ENCODE measurements at regions of chr2 and their contacts with region 1.

Region 1: DNA sequence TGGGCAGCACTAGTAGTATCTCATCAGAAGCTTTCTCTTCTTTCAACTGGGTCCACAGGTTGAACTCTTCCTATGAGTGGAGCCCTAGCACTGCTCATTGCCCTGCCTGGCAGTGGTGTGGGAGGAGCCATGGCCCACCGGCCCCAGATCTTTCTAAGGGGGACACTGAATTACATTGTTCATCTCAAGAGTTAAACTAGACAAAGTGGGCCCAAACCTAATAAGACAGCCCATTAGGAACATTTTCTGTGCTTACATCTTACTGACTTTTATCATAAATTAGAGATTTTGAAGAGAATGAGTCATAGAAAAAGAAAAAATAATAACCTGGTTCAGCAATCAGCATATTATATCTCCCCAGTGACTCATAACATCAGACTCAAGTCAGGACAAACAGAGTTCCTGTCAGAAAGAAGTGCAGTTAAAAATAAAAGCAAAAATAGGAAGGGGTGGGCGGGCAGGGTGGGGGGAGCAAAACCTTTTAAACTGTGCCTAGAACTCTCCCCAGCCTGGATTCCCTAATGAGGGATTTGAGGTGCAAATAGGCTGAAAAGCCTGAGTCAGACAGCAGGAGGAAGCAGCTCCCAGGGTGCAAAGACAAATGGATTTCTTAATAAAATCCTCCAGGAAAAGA is 161.6 kb upstream of the TRIB2 start:
- DNase-seq: no peak
- H3K4me3 Mint-ChIP-seq: peak overlapping the region; percentile 14
- H3K27ac Mint-ChIP-seq: peak overlapping the region; percentile 85
- H3K4me1 Mint-ChIP-seq: peaks cover 42% of the 10 kb centered on the region
- H3K27me3 Mint-ChIP-seq: no peaks in the 10 kb centered on the region

Region 2: DNA sequence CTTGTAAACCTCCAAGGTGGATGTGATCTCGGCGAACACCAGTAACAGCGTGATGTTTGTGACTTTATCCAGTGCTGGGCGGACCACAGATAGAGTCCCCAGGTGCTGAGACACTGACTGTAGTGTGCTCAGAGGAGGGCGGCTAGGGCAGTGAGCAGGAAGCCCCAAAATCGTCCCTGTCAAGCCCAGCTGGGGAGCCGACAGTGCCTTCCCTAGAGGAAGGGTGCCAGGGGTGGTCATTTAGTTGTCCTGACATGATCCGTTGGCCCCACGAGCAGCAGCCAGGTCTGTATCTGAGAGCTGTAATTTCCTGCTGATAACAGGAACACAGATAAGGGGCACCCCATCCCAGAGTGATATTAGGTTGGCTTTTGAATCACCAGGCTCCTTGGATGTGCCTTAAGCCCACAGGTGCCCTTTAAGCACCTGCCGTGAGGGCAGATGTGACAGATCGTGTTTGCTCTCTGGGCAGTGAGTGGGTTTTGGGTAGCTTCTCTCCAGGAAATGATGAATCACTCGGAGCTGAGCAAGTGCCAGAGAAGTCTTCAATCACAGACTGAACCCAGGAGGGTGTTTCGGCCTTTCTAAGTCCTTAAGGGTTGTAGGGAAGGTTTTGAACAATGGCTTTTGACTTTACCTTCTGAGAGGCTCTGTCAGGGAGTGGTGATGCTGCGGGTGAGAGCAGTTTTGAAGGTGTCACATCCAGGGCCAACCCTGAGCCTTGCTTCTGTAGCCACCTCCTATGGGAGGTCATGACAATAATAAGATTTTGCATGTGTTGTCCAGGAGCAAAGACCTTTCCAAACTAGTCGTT is 801.0 kb before region 1 on chr2:
- intact Hi-C with region 1: loop called (anchors 5 kb)
- DNase-seq: peak; percentile 52
- H3K4me3 Mint-ChIP-seq: peak overlapping the region; percentile 74
- H3K27ac Mint-ChIP-seq: peak overlapping the region; percentile 93
- H3K4me1 Mint-ChIP-seq: peaks cover 75% of the 10 kb centered on the region
- H3K27me3 Mint-ChIP-seq: no peaks in the 10 kb centered on the region

Region 3: DNA sequence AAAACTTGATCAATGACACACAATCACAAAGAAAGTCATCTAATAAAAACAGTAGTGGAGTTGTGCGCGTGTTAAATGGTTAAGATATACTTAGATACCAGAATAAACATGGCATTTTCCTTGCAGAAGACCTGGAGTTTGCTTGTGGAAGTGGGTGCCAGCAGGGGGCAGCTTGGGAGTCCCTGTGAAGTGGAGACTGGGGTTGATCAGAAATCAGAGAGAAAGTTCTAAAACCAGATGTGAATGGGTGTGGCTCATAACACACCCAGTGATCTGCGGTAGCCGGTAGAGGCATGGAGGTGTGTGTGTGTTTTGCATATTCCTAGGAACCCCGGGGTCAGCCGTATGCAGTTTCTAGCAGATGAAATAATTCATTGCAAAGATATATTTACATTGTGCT is 138.5 kb before region 1 on chr2:
- intact Hi-C with region 1: loop called (anchors 5 kb)
- DNase-seq: peak; percentile 54
- H3K4me3 Mint-ChIP-seq: no peak overlapping the region
- H3K27ac Mint-ChIP-seq: no peak overlapping the region
- H3K4me1 Mint-ChIP-seq: peaks cover 59% of the 10 kb centered on the region
- H3K27me3 Mint-ChIP-seq: no peaks in the 10 kb centered on the region

Region 4: GRCh38 chr2:12456293-12457151 is 98.6 kb before region 1 on chr2:
- intact Hi-C with region 1: loop called (anchors 5 kb)
- DNase-seq: peak; percentile 54
- H3K4me3 Mint-ChIP-seq: peak overlapping the region; percentile 61
- H3K27ac Mint-ChIP-seq: peak overlapping the region; percentile 74
- H3K4me1 Mint-ChIP-seq: peaks cover 42% of the 10 kb centered on the region
- H3K27me3 Mint-ChIP-seq: no peaks in the 10 kb centered on the region

Region 5: DNA sequence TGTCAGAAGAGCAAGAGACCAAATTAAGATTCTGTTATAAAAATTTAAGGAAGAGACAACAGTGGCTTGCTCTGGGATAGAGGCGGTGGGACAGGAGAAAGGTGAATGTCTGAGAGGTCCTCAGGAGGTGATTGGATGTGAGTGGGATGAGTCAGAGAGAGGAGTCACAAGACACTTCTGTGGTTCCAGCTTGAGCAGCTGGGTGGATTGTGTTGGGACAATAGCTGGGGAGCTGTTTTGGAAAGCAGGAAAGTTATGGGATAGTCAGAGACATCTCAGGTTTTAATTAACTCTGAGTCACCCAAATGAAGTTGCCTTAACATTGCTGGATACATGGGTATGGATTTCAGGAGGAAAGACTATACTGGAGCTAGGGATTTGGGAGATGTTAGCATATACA is 56.4 kb before region 1 on chr2:
- intact Hi-C with region 1: no loop called
- DNase-seq: no peak
- H3K4me3 Mint-ChIP-seq: no peak overlapping the region
- H3K27ac Mint-ChIP-seq: peak overlapping the region; percentile 6
- H3K4me1 Mint-ChIP-seq: peaks cover 79% of the 10 kb centered on the region
- H3K27me3 Mint-ChIP-seq: no peaks in the 10 kb centered on the region

Region 6: DNA sequence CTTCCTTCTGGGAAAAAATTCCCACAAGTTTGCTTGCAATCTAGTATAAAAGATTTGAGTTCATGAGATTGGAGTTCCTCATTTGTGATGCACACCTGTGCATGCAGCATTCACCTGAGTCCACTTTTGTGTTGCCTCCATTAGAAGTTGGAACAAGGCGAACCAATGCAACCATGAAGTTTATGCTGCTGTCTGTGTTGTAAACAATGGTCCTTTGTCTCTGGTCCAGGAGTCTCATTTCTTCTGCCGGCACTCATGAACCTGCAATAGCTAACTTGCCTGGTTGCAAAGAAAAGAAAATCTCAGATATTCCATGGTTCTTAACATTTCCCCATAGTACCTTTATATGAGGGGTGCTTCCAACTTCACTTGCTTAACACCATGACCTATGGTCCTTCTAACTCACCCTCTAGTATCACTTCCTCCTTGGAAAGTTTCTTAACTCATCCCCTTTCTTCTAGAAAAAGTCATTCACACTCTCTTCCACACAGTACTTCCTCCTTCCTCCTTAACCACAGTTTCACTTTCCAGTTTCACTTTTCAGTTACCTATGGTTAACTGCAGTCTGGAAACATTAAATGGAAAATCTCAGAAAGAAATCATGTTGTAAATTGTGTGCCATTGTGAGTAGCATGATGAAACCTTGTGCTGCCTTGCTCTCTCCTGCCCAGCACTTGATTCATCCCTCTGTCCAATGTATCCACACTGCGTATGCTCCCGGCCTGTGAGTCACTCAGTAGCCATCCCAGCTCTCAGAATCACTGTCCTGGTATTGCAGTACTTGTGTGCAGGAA is 32.8 kb after region 1 on chr2:
- intact Hi-C with region 1: loop called (anchors 1 kb)
- DNase-seq: no peak
- H3K4me3 Mint-ChIP-seq: no peak overlapping the region
- H3K27ac Mint-ChIP-seq: no peak overlapping the region
- H3K4me1 Mint-ChIP-seq: peaks cover 15% of the 10 kb centered on the region
- H3K27me3 Mint-ChIP-seq: no peaks in the 10 kb centered on the region

Region 7: DNA sequence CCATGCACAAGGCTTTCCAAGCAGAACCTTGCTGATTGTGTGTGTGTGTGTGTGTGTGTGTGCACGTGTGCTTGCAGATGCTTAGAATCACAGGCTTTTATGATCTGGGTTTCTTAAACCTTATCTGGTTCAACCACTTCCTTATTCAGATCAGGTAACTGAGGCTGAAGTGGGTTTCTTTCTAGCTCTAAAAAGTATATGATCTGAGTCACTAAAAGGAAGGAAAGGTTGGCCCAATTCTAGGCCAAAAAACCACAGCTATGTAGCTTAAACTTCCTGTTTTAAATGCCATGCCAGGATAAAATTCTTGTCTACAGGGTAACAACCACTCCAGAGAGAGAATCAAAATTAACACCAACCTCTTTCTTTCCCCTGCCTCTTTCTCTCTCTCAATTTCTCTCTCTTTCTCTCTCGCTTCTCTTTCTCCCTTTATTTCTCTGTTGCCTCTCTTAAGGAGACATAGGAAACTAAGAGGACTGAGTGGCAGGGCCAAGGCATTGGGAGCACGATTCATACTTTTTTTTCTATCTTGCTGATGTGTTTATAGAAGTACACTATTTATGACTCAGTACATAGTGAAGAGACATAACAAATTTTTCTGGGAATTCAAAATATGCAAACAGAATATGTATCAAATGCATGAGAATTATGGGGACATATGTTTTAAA is 301.9 kb after region 1 on chr2:
- intact Hi-C with region 1: loop called (anchors 5 kb)
- DNase-seq: peak; percentile 28
- H3K4me3 Mint-ChIP-seq: no peak overlapping the region
- H3K27ac Mint-ChIP-seq: no peak overlapping the region
- H3K4me1 Mint-ChIP-seq: peaks cover 20% of the 10 kb centered on the region
- H3K27me3 Mint-ChIP-seq: peaks cover 3% of the 10 kb centered on the region

Measured in activated T-helper 2 cell treated with anti-CD3 and anti-CD28 coated beads, Interferon-gamma antibody, Interleukin-2, Interleukin-4, amounts not matched to agents 10 μg/mL and 5 μg/mL and 100 μg/mL, durations not matched to agents 14 hours and 24 hours and 36 hours (primary cell).